Naive thymus-derived CD4-positive, alpha-beta T cell (primary cell): ENCODE measurements at regions of chr9 and their contacts with region 1.

Region 1: DNA sequence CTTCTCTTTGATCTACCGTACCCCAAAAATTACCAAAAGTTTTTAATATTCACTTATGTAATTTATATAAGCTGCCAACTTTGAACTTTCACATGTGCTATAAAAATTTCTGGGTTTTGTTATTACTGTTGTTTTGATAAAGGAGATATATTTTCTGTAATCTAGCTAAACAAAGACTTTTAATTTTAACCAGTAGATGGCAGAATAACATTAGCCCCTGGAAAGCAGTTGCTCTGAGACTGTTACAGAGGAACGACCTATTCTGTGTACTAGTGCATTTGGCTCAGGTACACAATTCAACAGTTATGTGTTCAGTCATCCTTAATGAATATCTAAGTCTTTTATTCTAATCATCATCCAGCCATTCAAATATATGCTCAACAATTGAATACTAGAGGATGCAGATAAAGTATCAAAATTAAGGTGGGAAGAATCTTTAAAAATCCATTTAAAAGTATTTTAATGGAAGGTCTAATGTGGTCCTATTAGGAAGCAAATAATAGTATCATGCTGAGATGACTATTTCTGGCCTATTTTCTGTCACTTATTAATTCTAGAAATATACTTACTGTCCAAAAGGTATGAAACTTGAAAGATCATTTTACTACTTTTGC is 8.6 kb downstream of the KLHL9 start:
- DNase-seq: peak in 7 of 9 donors; percentile 31 to 67 (median 56)
- ATAC-seq: peak; percentile 95
- H3K4me3 ChIP-seq: no peak overlapping the region
- H3K4me3 Mint-ChIP-seq: peak overlapping the region in 4 of 10 donors; percentile 17 to 62 (median 40)
- H3K27ac ChIP-seq: no peak overlapping the region
- H3K27ac Mint-ChIP-seq: peak overlapping the region in 3 of 9 donors; percentile 17 to 73 (median 35)
- H3K4me1 ChIP-seq: peaks cover 10 to 23% of the 10 kb centered on the region in 2 donors
- H3K4me1 Mint-ChIP-seq: peaks cover 32 to 67% (median 55%) of the 10 kb centered on the region in 7 donors
- H3K27me3 ChIP-seq: no peaks in the 10 kb centered on the region
- H3K27me3 Mint-ChIP-seq: no peaks in the 10 kb centered on the region

Region 2: DNA sequence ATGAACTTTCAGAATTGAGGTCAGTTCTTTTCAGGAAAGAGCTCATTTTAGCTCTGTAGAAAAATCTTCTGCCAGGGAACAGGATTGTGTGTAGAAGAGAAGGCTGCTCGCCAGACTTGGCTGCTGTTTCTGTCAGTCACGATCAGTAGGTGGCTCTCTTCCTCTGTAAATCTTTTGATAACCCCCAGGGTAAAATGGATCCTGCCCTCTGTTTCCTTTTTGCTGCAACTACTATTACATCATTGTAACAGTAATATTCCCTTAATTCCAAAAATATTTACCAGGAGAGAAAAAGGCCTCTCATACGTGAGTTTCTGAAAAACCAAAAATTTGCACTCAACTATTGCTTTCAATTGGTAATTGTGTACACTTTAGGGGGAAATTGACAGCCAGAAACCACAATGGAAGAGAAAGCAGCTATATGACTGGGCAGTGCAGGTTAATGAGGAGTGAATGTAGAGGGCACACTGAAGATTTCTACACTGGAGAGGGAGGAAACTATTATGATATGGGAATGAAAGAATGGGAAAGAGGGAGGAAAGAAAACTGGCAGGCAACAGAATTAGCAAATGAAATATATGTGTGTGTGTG is 172.5 kb before region 1 on chr9:
- CTCF ChIA-PET with region 1: no interaction called
- POLR2A ChIA-PET with region 1: no interaction called
- intact Hi-C with region 1: loop called in 1 of 2 experiments (anchors 5 kb)
- DNase-seq: peak in 4 of 9 donors; percentile 2 to 23 (median 2)
- ATAC-seq: peak; percentile 58
- H3K4me3 ChIP-seq: no peak overlapping the region
- H3K4me3 Mint-ChIP-seq: no peak overlapping the region
- H3K27ac ChIP-seq: no peak overlapping the region
- H3K27ac Mint-ChIP-seq: no peak overlapping the region
- H3K4me1 ChIP-seq: no peaks in the 10 kb centered on the region
- H3K4me1 Mint-ChIP-seq: peaks cover 2 to 23% (median 3%) of the 10 kb centered on the region in 7 donors
- H3K27me3 ChIP-seq: no peaks in the 10 kb centered on the region
- H3K27me3 Mint-ChIP-seq: peaks cover 0 to 33% (median 3%) of the 10 kb centered on the region in 5 donors

Region 3: GRCh38 chr9:21239911-21240310 is 86.7 kb before region 1 on chr9 and contains the start of gene IFNA14:
- CTCF ChIA-PET with region 1: interaction called, 4 read pairs
- POLR2A ChIA-PET with region 1: no interaction called
- intact Hi-C with region 1: loop called in 1 of 2 experiments (anchors 5 kb)
- DNase-seq: no peak
- ATAC-seq: no peak
- H3K4me3 ChIP-seq: no peak within 1 kb of the TSS
- H3K4me3 Mint-ChIP-seq: no peak within 1 kb of the TSS
- H3K27ac ChIP-seq: no peak within 1 kb of the TSS
- H3K27ac Mint-ChIP-seq: no peak within 1 kb of the TSS
- H3K4me1 ChIP-seq: peaks cover 0 to 5% of the 10 kb centered on the region in 2 donors
- H3K4me1 Mint-ChIP-seq: peaks cover 6 to 19% (median 12%) of the 10 kb centered on the region in 7 donors
- H3K27me3 ChIP-seq: peaks cover 0 to 2% of the 10 kb centered on the region in 2 donors
- H3K27me3 Mint-ChIP-seq: peaks cover 14 to 53% (median 15%) of the 10 kb centered on the region in 5 donors
- total RNA-seq, gene IFNA14: not detected

Region 4: DNA sequence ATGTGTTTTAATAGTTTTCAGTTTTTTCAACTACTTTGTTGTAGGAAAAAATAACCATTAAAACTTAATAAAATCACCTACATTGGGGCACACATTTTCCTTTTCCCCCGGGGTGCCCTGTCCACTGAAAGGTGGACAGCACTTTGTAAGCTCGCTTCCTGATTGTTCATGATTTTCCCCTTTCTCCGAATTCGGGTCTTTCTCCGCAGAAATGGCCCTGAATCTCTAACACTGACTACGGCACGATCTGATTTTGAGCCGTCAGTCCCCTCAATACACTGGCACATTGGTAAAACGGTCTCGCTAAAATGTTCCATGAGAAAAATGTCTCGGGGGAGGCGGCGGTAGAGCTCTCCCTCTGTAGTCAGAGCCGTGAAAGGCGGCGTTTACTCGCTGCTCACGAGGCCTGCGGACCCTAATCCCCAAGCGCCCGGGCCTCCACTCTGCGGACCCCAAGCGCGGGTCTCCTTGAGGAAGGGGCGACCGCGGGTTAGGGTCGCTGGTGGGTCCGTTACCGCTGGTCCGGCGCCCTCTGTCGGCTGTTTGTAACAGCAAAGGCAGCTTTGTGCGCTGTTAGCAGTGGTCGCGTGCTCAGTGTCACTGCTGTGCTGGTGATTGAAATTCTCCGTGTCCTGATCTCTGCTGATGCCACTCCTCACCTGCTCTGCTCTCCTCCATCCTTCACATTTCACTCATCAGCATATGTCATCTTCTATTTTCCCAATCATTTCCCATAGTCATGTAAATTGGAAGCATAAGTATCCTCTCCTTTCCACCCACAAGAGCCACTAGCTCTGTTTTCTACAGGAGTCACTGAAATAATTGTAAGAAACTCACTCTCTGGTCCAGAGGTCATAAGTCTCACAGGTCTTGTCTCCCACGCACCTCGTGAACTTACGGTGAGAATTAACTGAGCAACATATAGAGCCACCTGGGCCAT is 69.4 kb after region 1 on chr9:
- CTCF ChIA-PET with region 1: interaction called, 54 read pairs
- POLR2A ChIA-PET with region 1: interaction called, 10 read pairs
- intact Hi-C with region 1: loop called (anchors 1 kb)
- DNase-seq: peak; percentile 35 to 65 (median 56)
- ATAC-seq: peak; percentile 83
- H3K4me3 ChIP-seq: peak overlapping the region; percentile 51
- H3K4me3 Mint-ChIP-seq: peak overlapping the region; percentile 39 to 81 (median 74)
- H3K27ac ChIP-seq: no peak overlapping the region
- H3K27ac Mint-ChIP-seq: peak overlapping the region in 1 of 9 donors; percentile 4
- H3K4me1 ChIP-seq: no peaks in the 10 kb centered on the region
- H3K4me1 Mint-ChIP-seq: peaks cover 5 to 13% (median 9%) of the 10 kb centered on the region in 7 donors
- H3K27me3 ChIP-seq: peaks cover 8 to 10% of the 10 kb centered on the region in 2 donors
- H3K27me3 Mint-ChIP-seq: peaks cover 52 to 84% (median 74%) of the 10 kb centered on the region in 5 donors

Region 5: DNA sequence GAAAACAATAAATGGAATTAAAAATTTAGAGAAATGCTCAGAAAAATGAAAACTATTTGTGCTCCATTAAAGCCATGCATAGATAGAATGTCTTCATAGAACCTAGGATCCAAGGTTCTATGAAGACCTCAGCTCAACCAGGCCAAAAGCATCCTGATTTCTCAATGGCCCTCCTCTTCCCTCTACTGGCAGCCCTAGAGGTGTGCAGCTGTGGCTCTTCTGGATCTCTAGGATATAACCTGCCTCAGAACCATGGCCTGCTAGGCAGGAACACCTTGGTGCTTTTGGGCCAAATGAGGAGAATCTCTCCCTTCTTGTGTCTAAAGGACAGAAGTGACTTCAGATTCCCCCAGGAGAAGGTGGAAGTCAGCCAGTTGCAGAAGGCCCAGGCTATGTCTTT is 128.7 kb after region 1 on chr9:
- CTCF ChIA-PET with region 1: interaction called, 4 read pairs
- POLR2A ChIA-PET with region 1: no interaction called
- intact Hi-C with region 1: loop called (anchors 2 kb)
- DNase-seq: peak in 7 of 9 donors; percentile 16 to 51 (median 45)
- ATAC-seq: peak; percentile 85
- H3K4me3 ChIP-seq: no peak overlapping the region
- H3K4me3 Mint-ChIP-seq: no peak overlapping the region
- H3K27ac ChIP-seq: no peak overlapping the region
- H3K27ac Mint-ChIP-seq: no peak overlapping the region
- H3K4me1 ChIP-seq: no peaks in the 10 kb centered on the region
- H3K4me1 Mint-ChIP-seq: peaks cover 0 to under 1% (median 0%) of the 10 kb centered on the region in 7 donors
- H3K27me3 ChIP-seq: no peaks in the 10 kb centered on the region
- H3K27me3 Mint-ChIP-seq: peaks cover 0 to 48% (median 7%) of the 10 kb centered on the region in 5 donors

Region 6: GRCh38 chr9:21465859-21466518 is 139.4 kb after region 1 on chr9:
- CTCF ChIA-PET with region 1: interaction called, 9 read pairs
- POLR2A ChIA-PET with region 1: no interaction called
- intact Hi-C with region 1: loop called in 1 of 2 experiments (anchors 2 kb)
- DNase-seq: peak in 7 of 9 donors; percentile 37 to 67 (median 59)
- ATAC-seq: peak; percentile 85
- H3K4me3 ChIP-seq: no peak overlapping the region
- H3K4me3 Mint-ChIP-seq: no peak overlapping the region
- H3K27ac ChIP-seq: no peak overlapping the region
- H3K27ac Mint-ChIP-seq: no peak overlapping the region
- H3K4me1 ChIP-seq: no peaks in the 10 kb centered on the region
- H3K4me1 Mint-ChIP-seq: peaks cover 0 to 4% (median 0%) of the 10 kb centered on the region in 7 donors
- H3K27me3 ChIP-seq: no peaks in the 10 kb centered on the region
- H3K27me3 Mint-ChIP-seq: peaks cover under 1 to 37% (median 4%) of the 10 kb centered on the region in 5 donors

Region 7: GRCh38 chr9:21709464-21710058 is 382.9 kb after region 1 on chr9:
- CTCF ChIA-PET with region 1: no interaction called
- POLR2A ChIA-PET with region 1: no interaction called
- intact Hi-C with region 1: loop called (anchors 2 to 5 kb)
- DNase-seq: peak; percentile 14 to 56 (median 46)
- ATAC-seq: peak; percentile 88
- H3K4me3 ChIP-seq: no peak overlapping the region
- H3K4me3 Mint-ChIP-seq: no peak overlapping the region
- H3K27ac ChIP-seq: no peak overlapping the region
- H3K27ac Mint-ChIP-seq: no peak overlapping the region
- H3K4me1 ChIP-seq: no peaks in the 10 kb centered on the region
- H3K4me1 Mint-ChIP-seq: peaks cover 0 to 22% (median 15%) of the 10 kb centered on the region in 7 donors
- H3K27me3 ChIP-seq: no peaks in the 10 kb centered on the region
- H3K27me3 Mint-ChIP-seq: peaks cover 0 to 27% (median 0%) of the 10 kb centered on the region in 5 donors